ENCODE measurements at regions of chr16 and their contacts with region 1.

Region 1: DNA sequence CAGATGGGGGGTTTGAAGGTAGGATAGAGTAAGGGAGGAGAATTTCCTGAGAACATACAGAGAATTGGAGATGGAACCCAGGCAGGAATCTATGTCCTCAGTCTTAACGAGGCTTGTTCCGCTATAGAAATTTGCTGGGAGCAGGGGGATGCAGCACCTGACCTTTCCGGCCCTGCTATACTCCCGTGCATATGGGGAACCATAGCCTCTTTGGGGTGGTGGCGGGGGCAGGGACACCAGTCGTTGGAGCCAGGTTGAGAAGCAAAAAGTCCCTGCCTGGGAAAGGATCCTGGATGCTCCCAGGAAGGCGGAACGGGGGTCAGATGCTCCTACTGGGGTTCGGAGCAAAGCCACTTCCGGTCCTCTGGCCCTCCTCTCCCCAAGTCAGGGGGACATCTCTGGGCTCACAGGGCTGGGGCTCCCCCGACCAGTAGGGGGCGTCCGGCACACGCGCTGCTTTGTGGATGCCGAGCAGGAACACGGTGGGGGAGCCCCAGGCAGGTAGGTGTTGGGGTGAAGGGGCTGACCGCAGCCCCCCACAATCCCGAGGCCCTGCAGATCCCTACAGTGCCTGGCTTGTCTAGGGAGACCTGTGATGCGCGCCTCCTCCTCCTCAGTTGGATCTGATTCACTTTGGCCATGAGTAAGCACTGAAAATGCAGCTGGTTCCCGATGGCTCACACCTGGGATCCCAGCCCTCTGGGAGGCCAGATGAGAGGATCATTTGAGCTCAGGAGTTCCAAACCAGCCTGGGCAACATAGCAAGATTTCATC is 15.5 kb upstream of the TFAP4 start:
- DNase-seq: peak; percentile 53 to 78
- H3K4me3 ChIP-seq: no peak overlapping the region
- H3K27ac ChIP-seq: no peak overlapping the region
- H3K4me1 ChIP-seq: peaks cover 57% of the 10 kb centered on the region
- H3K27me3 ChIP-seq: no peaks in the 10 kb centered on the region
- CTCF ChIP-seq: peak; percentile 90

Region 2: DNA sequence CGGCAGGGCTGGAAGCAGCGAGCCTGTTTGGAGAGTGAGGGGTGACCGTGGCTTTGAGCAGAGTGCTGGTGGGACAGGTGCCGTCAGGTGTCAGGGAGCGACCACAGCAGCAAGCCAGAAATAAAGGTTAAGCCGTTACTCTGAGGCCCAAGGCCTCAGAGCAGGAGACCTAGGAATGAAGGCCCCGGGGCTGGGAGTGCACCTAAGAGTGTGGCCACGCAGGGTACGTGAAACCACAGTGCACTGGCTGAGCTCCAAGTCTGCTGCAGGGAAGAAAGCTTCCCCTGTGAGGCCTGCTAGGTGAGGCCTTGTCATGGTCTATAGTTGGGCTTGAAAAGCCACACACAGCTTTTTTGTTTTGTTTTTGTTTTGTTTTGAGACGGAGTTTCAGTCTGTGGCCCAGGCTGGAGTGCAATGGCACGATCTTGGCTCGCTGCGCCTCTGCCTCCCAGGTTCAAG is 778.8 kb before region 1 on chr16:
- CTCF ChIA-PET with region 1: no interaction called
- POLR2A ChIA-PET with region 1: interaction called, 11 read pairs
- intact Hi-C with region 1: no loop called
- DNase-seq: peak; percentile 89 to 96
- H3K4me3 ChIP-seq: no peak overlapping the region
- H3K27ac ChIP-seq: 0 out of 2 replicates have a peak overlapping the region, but pooled peaks have one; percentile 3
- H3K4me1 ChIP-seq: peaks cover 23% of the 10 kb centered on the region
- H3K27me3 ChIP-seq: no peaks in the 10 kb centered on the region
- CTCF ChIP-seq: no peak

Region 3: GRCh38 chr16:4298761-4299522 is 10.6 kb after region 1 on chr16:
- CTCF ChIA-PET with region 1: interaction called, 5 read pairs
- POLR2A ChIA-PET with region 1: no interaction called
- intact Hi-C with region 1: loop called (anchors 1 kb)
- DNase-seq: peak; percentile 91 to 96
- H3K4me3 ChIP-seq: peak overlapping the region; percentile 15; the same call in 1 of the 2 replicates
- H3K27ac ChIP-seq: peak overlapping the region; percentile 73
- H3K4me1 ChIP-seq: peaks cover 33% of the 10 kb centered on the region
- H3K27me3 ChIP-seq: no peaks in the 10 kb centered on the region
- CTCF ChIP-seq: no peak

Region 4: GRCh38 chr16:4315186-4316109 is 27.1 kb after region 1 on chr16 and contains the start of gene GLIS2:
- CTCF ChIA-PET with region 1: interaction called, 9 read pairs
- POLR2A ChIA-PET with region 1: interaction called, 7 read pairs
- intact Hi-C with region 1: loop called (anchors 1 kb)
- DNase-seq: peak in 1 of 2 experiments; percentile 85
- H3K4me3 ChIP-seq: peak within 1 kb of the TSS; percentile 78
- H3K27ac ChIP-seq: no peak within 1 kb of the TSS
- H3K4me1 ChIP-seq: peaks cover 20% of the 10 kb centered on the region
- H3K27me3 ChIP-seq: no peaks in the 10 kb centered on the region
- CTCF ChIP-seq: no peak
- total RNA-seq, gene GLIS2: 44.2 and 48.3 TPM in 2 replicates

Region 5: DNA sequence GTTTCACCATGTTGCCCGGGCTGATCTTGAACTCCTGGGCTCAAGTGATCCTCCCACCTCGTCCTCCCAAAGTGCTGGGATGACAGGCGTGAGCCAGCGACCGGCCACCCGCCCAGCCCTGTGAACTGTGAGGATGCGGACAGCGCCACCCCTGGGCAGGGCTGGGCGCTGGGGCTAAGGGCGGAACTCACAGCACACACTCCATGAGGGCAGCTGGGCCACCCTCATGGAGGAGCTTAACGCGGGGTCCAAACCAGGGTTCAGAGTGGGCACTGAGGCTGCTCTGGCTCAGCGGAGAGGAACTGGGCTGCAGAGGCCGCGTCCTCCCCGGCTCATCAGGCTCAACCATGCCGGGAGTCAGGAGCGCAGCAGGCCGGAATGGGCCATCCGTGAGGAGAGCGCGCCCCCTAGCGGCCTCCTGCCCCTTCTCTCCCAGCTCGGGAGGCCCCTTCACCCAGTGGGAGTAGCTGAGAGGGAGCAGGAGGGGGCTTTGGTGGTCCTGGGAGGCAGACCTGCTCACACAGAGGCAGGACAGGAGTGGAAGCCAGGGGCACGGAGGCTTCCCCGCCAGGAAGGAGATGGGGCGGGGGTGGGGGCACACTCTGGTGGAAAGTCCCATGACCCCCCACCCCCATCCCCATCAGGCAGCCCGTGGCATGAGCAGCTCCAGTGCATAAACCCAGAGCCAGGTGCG is 114.3 kb after region 1 on chr16:
- CTCF ChIA-PET with region 1: no interaction called
- POLR2A ChIA-PET with region 1: no interaction called
- intact Hi-C with region 1: loop called (anchors 1 kb)
- DNase-seq: peak in 1 of 2 experiments; percentile 87
- H3K4me3 ChIP-seq: no peak overlapping the region
- H3K27ac ChIP-seq: no peak overlapping the region
- H3K4me1 ChIP-seq: peaks cover 4% of the 10 kb centered on the region; the same call in 1 of the 2 replicates
- H3K27me3 ChIP-seq: no peaks in the 10 kb centered on the region
- CTCF ChIP-seq: peak; percentile 93

Region 6: DNA sequence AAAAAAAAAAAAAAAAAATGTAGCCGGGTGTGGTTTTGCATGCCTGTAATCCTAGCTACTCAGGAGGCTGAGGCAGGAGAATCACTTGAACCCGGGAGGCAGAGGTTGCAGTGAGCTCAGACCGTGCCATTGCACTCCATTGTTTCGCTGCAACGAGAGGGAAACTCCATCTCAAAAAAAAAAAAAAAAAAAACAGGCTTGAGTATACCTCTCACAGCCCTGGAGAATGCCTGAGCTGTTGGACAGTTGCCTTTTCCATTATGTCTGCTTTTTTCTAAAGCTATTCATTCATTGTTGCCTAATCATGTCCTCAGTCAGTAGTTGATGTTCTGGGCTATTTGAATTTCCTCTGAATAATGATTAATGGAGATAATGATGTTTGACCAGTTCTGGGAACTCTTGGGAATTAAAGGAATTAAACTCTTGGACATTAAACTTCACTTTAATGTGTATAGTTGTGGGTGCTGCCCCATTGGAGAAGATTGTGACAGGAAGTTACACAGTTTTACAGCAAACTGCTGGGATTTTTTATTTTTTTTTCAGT is 199.7 kb after region 1 on chr16:
- CTCF ChIA-PET with region 1: no interaction called
- POLR2A ChIA-PET with region 1: no interaction called
- intact Hi-C with region 1: no loop called
- DNase-seq: no peak
- H3K4me3 ChIP-seq: no peak overlapping the region
- H3K27ac ChIP-seq: no peak overlapping the region
- H3K4me1 ChIP-seq: no peaks in the 10 kb centered on the region
- H3K27me3 ChIP-seq: no peaks in the 10 kb centered on the region
- CTCF ChIP-seq: no peak

Region 7: DNA sequence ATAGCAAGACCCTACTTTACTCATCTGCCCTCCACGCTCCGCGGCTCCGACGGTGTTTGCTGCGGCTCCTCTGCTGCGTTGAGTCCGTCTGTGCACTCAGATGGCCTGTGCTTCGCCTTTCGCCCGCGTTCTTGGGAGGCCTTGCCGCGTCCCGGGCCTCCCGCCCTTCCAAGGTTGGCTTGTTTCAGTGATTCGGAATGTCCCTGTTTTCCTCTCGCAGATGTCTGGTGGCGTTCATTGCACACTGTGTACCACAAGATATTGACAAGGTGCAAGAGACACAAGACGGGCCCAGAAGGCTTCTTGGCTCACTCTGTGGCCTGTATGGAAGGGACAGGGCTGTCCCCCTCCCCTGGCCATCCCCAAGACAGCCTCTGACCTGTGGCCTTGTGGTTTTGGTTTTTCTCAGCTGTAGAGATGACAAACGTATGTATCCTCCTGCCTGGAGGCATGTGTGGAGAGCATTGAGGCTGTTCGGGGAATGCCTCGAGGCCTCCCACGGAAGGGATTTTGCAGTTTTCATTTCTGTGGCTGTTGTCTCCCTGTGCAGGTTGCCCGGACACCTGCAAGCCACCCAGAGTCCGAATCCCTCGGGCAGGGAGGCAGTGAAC is 351.7 kb after region 1 on chr16:
- CTCF ChIA-PET with region 1: no interaction called
- POLR2A ChIA-PET with region 1: no interaction called
- intact Hi-C with region 1: no loop called
- DNase-seq: no peak
- H3K4me3 ChIP-seq: no peak overlapping the region
- H3K27ac ChIP-seq: no peak overlapping the region
- H3K4me1 ChIP-seq: no peaks in the 10 kb centered on the region
- H3K27me3 ChIP-seq: no peaks in the 10 kb centered on the region
- CTCF ChIP-seq: no peak

Measured in PC-9 (cell line).